Mammary epithelial cell (primary cell): ENCODE measurements at regions of chr16 and their contacts with region 1.

Region 1: GRCh38 chr16:87924422-87925298 is 11.7 kb downstream of the CA5A start:
- DNase-seq: peak; percentile 56
- H3K4me3 ChIP-seq: no peak overlapping the region
- H3K27ac ChIP-seq: no peak overlapping the region
- H3K4me1 ChIP-seq: peaks cover 13% of the 10 kb centered on the region
- H3K27me3 ChIP-seq: peaks cover 1% of the 10 kb centered on the region
- CTCF ChIP-seq: no peak

Region 2: GRCh38 chr16:87581833-87582203 is 342.8 kb before region 1 on chr16:
- CTCF ChIA-PET with region 1: no interaction called
- dilution Hi-C with region 1: no loop called
- in situ Hi-C with region 1: loop called in 1 of 2 experiments (anchors 25 kb)
- intact Hi-C with region 1: no loop called
- DNase-seq: peak; percentile 79
- H3K4me3 ChIP-seq: no peak overlapping the region
- H3K27ac ChIP-seq: no peak overlapping the region
- H3K4me1 ChIP-seq: peaks cover 8% of the 10 kb centered on the region
- H3K27me3 ChIP-seq: peaks cover 3% of the 10 kb centered on the region
- CTCF ChIP-seq: no peak